ENCODE measurements at regions of chr14 and their contacts with region 1.

Region 1: GRCh38 chr14:55707365-55707804 is 127.4 kb downstream of the KTN1 start:
- DNase-seq: no peak
- H3K4me3 Mint-ChIP-seq: no peak overlapping the region
- H3K27ac Mint-ChIP-seq: no peak overlapping the region
- H3K4me1 Mint-ChIP-seq: peaks cover 22% of the 10 kb centered on the region
- H3K27me3 Mint-ChIP-seq: no peaks in the 10 kb centered on the region
- CTCF ChIP-seq: peak; percentile 54

Region 2: GRCh38 chr14:56117765-56118610 is 410.6 kb after region 1 on chr14 and contains the start of gene PELI2:
- CTCF ChIA-PET with region 1: no interaction called
- intact Hi-C with region 1: loop called (anchors 5 kb)
- DNase-seq: peak; percentile 85
- H3K4me3 Mint-ChIP-seq: peak within 1 kb of the TSS; percentile 96
- H3K27ac Mint-ChIP-seq: peak within 1 kb of the TSS; percentile 86
- H3K4me1 Mint-ChIP-seq: peaks cover 42% of the 10 kb centered on the region
- H3K27me3 Mint-ChIP-seq: no peaks in the 10 kb centered on the region
- CTCF ChIP-seq: no peak
- total RNA-seq, gene PELI2: 14.7 and 19.5 TPM in 2 replicates

Region 3: DNA sequence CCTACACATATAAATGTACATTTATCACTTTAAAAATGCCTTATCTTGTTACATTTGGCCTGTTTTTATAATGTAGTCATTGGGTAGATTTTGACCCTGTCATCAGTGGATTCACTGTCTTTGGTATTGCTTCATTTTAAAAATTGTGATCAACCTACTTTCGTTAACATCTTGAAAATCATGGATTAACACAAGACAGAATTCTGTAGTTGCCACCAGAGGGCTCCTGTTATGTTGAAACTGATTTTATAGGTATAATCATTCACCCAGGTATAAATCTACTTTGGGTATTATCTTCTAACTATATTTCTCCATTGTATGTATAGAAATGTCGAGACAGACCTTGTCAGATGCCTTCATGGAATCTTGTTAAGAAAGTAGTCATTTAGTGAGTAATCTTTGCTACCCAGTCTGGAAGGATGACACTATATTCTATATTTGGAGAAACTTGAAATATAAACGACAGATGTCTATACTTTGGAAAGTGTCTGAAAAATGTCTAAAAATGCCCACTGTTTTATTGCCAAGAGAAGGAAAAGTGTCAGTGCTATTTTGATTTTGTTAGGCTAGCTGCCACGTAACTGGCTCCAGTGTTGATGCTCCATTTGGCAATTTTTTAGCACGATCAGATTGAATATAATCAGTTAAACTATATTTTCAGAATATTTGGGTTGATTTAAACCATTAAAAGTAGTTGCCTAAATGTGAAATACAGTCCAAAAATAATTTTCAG is 540.2 kb after region 1 on chr14:
- CTCF ChIA-PET with region 1: interaction called, 3 read pairs
- intact Hi-C with region 1: loop called (anchors 10 kb)
- DNase-seq: no peak
- H3K4me3 Mint-ChIP-seq: no peak overlapping the region
- H3K27ac Mint-ChIP-seq: no peak overlapping the region
- H3K4me1 Mint-ChIP-seq: no peaks in the 10 kb centered on the region
- H3K27me3 Mint-ChIP-seq: no peaks in the 10 kb centered on the region
- CTCF ChIP-seq: no peak

Region 4: DNA sequence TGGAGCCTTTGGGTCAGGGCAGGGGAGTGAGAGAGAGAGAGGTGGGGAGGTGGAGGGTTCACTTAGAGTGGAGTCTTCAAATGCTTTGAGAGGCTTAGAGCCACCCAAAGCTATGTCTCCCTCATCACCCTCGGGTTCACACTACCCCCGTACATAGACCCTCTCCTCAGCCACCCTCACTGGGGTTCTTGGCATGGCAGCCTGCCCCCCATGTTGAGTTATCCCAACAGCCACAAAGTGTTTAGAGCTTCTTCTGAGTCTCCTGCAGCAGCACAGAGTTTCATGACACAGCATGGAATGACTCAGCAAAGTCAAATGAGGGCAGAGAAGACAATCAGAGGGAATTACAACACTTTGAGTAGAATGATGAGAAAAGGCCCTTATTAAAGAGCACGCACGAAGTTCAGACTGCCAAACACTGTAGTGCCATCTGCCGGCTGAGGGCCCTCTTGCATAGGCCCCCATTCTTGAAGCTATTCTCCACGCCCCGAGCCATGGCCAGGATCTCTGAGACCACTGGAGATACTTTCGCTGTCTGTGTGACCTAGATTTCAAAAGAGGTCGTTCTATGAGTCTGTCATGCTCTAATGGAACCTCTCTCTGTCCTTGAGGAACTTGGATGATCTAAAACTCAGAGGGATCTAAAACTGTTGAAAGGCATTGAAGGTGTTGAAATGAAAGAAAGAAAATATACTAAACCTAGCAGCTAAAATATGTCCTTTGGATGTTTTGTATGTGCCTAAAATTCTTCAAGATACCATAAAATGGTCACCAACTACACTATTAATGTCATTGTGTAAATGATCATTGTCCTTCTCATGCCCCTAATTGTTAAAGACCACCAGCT is 632.7 kb after region 1 on chr14:
- CTCF ChIA-PET with region 1: interaction called, 5 read pairs
- intact Hi-C with region 1: loop called (anchors 1 kb)
- DNase-seq: peak; percentile 58
- H3K4me3 Mint-ChIP-seq: no peak overlapping the region
- H3K27ac Mint-ChIP-seq: peak overlapping the region; percentile 7
- H3K4me1 Mint-ChIP-seq: peaks cover 13% of the 10 kb centered on the region
- H3K27me3 Mint-ChIP-seq: no peaks in the 10 kb centered on the region
- CTCF ChIP-seq: no peak

Region 5: DNA sequence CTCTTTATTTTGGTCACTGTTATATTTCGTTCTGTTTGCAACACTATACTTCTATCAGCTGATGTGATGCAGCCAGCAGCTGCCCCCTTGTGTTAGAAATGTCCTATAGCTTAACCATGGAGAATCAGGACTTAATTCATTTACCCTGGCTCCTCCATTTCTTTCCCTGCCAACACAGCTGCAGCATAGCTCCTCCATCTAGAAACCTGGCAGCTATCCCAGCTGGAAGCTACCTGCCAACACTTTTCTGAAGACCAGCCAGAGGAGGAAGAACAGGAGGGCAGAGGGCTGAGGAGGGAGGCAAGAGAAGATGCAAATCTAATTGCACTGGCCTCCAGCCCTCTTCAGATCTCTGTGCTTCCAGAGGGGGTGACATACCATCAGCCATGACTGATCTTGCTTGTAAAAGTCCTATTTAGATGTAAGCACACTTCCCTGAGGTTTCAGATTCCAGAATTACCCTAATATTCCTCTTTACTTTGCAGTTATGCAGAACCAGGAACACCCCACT is 715.4 kb after region 1 on chr14:
- CTCF ChIA-PET with region 1: no interaction called
- intact Hi-C with region 1: loop called (anchors 1 kb)
- DNase-seq: peak; percentile 35
- H3K4me3 Mint-ChIP-seq: no peak overlapping the region
- H3K27ac Mint-ChIP-seq: no peak overlapping the region
- H3K4me1 Mint-ChIP-seq: no peaks in the 10 kb centered on the region
- H3K27me3 Mint-ChIP-seq: peaks cover 19% of the 10 kb centered on the region
- CTCF ChIP-seq: peak; percentile 23

Region 6: GRCh38 chr14:56474419-56475022 is 767.1 kb after region 1 on chr14:
- CTCF ChIA-PET with region 1: interaction called, 6 read pairs
- intact Hi-C with region 1: loop called (anchors 1 kb)
- DNase-seq: peak; percentile 20
- H3K4me3 Mint-ChIP-seq: no peak overlapping the region
- H3K27ac Mint-ChIP-seq: no peak overlapping the region
- H3K4me1 Mint-ChIP-seq: no peaks in the 10 kb centered on the region
- H3K27me3 Mint-ChIP-seq: peaks cover 26% of the 10 kb centered on the region
- CTCF ChIP-seq: no peak

Measured in Calu3 (cell line).